Activated CD4-positive, alpha-beta memory T cell treated with anti-CD3 and anti-CD28 coated beads for 36 hours (primary cell): ENCODE measurements at regions of chr16 and their contacts with region 1.

Region 1: DNA sequence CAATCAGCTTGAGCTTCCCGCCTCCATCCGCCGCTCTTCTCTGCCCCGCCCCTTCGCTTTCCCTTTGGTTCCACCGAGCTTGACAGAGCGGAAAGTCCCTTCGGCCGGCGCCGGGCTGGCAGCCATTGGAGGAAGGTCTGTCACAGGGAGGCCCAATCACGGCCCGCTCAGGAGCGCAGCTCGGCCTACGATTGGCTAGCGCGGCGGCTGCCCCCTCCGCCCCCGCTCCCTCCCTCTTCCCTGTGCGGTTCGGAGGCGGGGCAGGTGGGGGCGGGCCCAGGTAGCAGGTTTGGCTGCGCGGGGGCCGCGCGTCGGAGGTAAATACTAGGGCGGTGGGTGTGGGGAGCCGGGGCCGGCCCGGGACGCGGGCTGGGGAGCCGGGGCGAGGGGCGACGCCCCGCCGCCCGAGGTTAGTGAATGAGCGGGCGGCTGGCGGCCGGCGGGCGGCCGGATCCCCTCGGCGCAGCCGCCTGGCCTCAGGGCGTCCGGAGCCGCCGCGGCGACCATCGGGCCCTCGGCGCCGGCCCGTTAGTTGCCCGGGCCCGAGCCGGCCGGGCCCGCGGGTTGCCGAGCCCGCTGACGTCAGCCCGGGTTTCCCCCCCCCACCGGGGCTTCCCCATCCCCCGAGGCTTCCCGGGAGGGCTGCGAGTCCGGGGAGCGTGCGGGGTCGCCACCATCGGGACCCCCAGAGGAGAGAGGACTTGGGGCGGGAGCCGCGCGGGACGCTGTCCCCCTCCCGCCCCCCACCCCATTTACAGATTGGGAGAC is at the start of gene CYLD:
- DNase-seq: peak; percentile 100
- H3K4me3 Mint-ChIP-seq: peak within 1 kb of the TSS; percentile 94
- H3K27ac Mint-ChIP-seq: peak within 1 kb of the TSS; percentile 97
- H3K4me1 Mint-ChIP-seq: peaks cover 44% of the 10 kb centered on the region
- H3K27me3 Mint-ChIP-seq: no peaks in the 10 kb centered on the region
- total RNA-seq, gene CYLD: 133 to 135 TPM

Region 2: GRCh38 chr16:50266337-50267091 is 475.5 kb before region 1 on chr16 and contains the start of gene ADCY7:
- CTCF ChIA-PET with region 1: interaction called, 4 read pairs
- POLR2A ChIA-PET with region 1: no interaction called
- intact Hi-C with region 1: loop called (anchors 5 kb)
- DNase-seq: peak; percentile 91
- H3K4me3 Mint-ChIP-seq: peak within 1 kb of the TSS; percentile 94
- H3K27ac Mint-ChIP-seq: peak within 1 kb of the TSS; percentile 97
- H3K4me1 Mint-ChIP-seq: peaks cover 71% of the 10 kb centered on the region
- H3K27me3 Mint-ChIP-seq: no peaks in the 10 kb centered on the region
- total RNA-seq, gene ADCY7: 100.0 to 107 TPM

Region 3: GRCh38 chr16:50548125-50548908 is 193.7 kb before region 1 on chr16 and contains the start of gene NKD1:
- CTCF ChIA-PET with region 1: no interaction called
- POLR2A ChIA-PET with region 1: no interaction called
- intact Hi-C with region 1: loop called (anchors 1 kb)
- DNase-seq: peak; percentile 80
- H3K4me3 Mint-ChIP-seq: peak within 1 kb of the TSS; percentile 84
- H3K27ac Mint-ChIP-seq: peak within 1 kb of the TSS; percentile 9
- H3K4me1 Mint-ChIP-seq: peaks cover 7% of the 10 kb centered on the region
- H3K27me3 Mint-ChIP-seq: no peaks in the 10 kb centered on the region
- total RNA-seq, gene NKD1: 0.67 to 1.6 TPM

Region 4: GRCh38 chr16:50681021-50681885 is 60.7 kb before region 1 on chr16 and contains the start of gene SNX20:
- CTCF ChIA-PET with region 1: interaction called, 71 read pairs
- POLR2A ChIA-PET with region 1: interaction called, 37 read pairs
- intact Hi-C with region 1: loop called (anchors 1 kb)
- DNase-seq: peak; percentile 79
- H3K4me3 Mint-ChIP-seq: peak within 1 kb of the TSS; percentile 89
- H3K27ac Mint-ChIP-seq: peak within 1 kb of the TSS; percentile 91
- H3K4me1 Mint-ChIP-seq: peaks cover 85% of the 10 kb centered on the region
- H3K27me3 Mint-ChIP-seq: no peaks in the 10 kb centered on the region
- total RNA-seq, gene SNX20: 55.4 to 56.9 TPM

Region 5: DNA sequence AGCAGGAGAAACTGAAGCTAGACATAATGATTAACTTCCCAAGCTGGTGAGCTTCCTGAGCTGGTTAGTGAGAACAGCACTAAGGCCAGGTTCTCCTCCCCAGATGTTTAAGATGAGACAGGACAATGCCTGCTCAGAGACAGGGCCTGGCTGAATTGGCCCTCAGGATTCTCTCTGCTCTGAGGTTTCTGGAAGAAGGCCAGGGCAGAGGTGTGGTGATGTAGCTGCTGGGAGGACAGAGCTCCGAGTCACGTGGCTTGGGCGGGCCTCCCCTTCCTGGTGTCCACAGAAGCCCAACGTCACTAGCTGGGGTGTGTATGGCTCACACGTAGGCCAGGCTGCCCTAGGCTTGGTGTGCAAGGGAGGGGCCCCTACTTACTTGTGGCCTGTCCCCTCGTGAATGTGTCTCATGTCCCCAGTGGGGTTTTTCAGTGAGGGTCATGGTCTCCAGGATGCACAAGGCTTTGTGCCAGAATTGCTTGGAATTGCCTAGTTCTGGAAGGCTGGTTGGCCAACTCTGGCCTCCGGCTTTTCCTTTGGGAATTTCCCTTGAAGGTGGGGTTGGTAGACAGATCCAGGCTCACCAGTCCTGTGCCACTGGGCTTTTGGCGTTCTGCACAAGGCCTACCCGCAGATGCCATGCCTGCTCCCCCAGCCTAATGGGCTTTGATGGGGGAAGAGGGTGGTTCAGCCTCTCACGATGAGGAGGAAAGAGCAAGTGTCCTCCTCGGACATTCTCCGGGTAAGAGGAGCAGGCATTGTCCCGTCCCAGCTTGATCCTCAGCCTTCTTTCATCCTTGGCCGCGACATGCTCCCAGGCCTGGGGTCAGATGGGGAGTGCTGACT is 45.2 kb before region 1 on chr16:
- CTCF ChIA-PET with region 1: interaction called, 14 read pairs
- POLR2A ChIA-PET with region 1: interaction called, 81 read pairs
- intact Hi-C with region 1: loop called (anchors 1 kb)
- DNase-seq: peak; percentile 90
- H3K4me3 Mint-ChIP-seq: peak overlapping the region; percentile 78
- H3K27ac Mint-ChIP-seq: peak overlapping the region; percentile 98
- H3K4me1 Mint-ChIP-seq: peaks cover 89% of the 10 kb centered on the region
- H3K27me3 Mint-ChIP-seq: no peaks in the 10 kb centered on the region

Region 6: DNA sequence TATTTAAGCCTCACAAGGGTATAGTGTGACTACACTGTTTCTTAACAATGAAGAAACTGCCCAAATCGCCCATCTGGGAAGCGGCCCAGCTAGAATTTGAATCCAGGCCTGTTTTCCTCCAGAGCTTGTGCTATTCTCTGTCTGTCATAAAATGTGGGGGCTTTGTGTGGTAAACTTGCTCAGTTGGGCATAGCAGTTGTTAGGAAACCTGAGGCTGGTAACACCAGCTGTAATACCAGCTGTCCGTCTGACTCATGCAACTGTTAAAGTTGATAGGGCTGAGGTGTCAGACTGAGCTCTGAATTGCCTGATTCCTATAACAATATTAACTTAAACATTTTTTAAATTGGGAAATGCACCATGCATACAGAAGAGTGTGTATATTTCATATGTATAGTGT is 39.3 kb before region 1 on chr16:
- CTCF ChIA-PET with region 1: interaction called, 9 read pairs
- POLR2A ChIA-PET with region 1: interaction called, 81 read pairs
- intact Hi-C with region 1: loop called (anchors 1 kb)
- DNase-seq: peak; percentile 40
- H3K4me3 Mint-ChIP-seq: no peak overlapping the region
- H3K27ac Mint-ChIP-seq: peak overlapping the region; percentile 51
- H3K4me1 Mint-ChIP-seq: peaks cover 76% of the 10 kb centered on the region
- H3K27me3 Mint-ChIP-seq: no peaks in the 10 kb centered on the region

Region 7: GRCh38 chr16:50884066-50884860 is 142.3 kb after region 1 on chr16:
- CTCF ChIA-PET with region 1: no interaction called
- POLR2A ChIA-PET with region 1: no interaction called
- intact Hi-C with region 1: no loop called
- DNase-seq: peak; percentile 47
- H3K4me3 Mint-ChIP-seq: no peak overlapping the region
- H3K27ac Mint-ChIP-seq: no peak overlapping the region
- H3K4me1 Mint-ChIP-seq: no peaks in the 10 kb centered on the region
- H3K27me3 Mint-ChIP-seq: peaks cover 12% of the 10 kb centered on the region